CD14-positive monocyte (primary cell): ENCODE measurements at regions of chr6 and their contacts with region 1.

Region 1: GRCh38 chr6:116531675-116532570 is 13.6 kb downstream of the TRAPPC3L start:
- DNase-seq: peak; percentile 63 to 66 (median 65)
- H3K4me3 ChIP-seq: no peak overlapping the region
- H3K4me3 Mint-ChIP-seq: no peak overlapping the region
- H3K27ac ChIP-seq: no peak overlapping the region
- H3K27ac Mint-ChIP-seq: no peak overlapping the region
- H3K4me1 ChIP-seq: peaks cover 11 to 14% of the 10 kb centered on the region in 2 donors
- H3K4me1 Mint-ChIP-seq: peaks cover 19% of the 10 kb centered on the region
- H3K27me3 ChIP-seq: no peaks in the 10 kb centered on the region
- H3K27me3 Mint-ChIP-seq: peaks cover 0 to 4% (median 2%) of the 10 kb centered on the region in 3 donors
- CTCF ChIP-seq: peak; percentile 89

Region 2: GRCh38 chr6:116279260-116280063 is 252.5 kb before region 1 on chr6 and contains the start of gene TSPYL1:
- intact Hi-C with region 1: loop called in 1 of 2 experiments (anchors 5 kb)
- DNase-seq: peak; percentile 92 to 98 (median 95)
- H3K4me3 ChIP-seq: peak within 1 kb of the TSS; percentile 53 to 90 (median 85)
- H3K4me3 Mint-ChIP-seq: peak within 1 kb of the TSS; percentile 96 to 100
- H3K27ac ChIP-seq: peak within 1 kb of the TSS; percentile 96 to 97
- H3K27ac Mint-ChIP-seq: peak within 1 kb of the TSS; percentile 98 to 99 (median 99)
- H3K4me1 ChIP-seq: peaks cover 36 to 49% of the 10 kb centered on the region in 2 donors
- H3K4me1 Mint-ChIP-seq: peaks cover 43% of the 10 kb centered on the region
- H3K27me3 ChIP-seq: no peaks in the 10 kb centered on the region
- H3K27me3 Mint-ChIP-seq: peaks cover 0 to 2% (median 1%) of the 10 kb centered on the region in 3 donors
- CTCF ChIP-seq: no peak
- polyA plus RNA-seq, gene TSPYL1: 19.6 to 21.0 (median 20.0) TPM

Region 3: DNA sequence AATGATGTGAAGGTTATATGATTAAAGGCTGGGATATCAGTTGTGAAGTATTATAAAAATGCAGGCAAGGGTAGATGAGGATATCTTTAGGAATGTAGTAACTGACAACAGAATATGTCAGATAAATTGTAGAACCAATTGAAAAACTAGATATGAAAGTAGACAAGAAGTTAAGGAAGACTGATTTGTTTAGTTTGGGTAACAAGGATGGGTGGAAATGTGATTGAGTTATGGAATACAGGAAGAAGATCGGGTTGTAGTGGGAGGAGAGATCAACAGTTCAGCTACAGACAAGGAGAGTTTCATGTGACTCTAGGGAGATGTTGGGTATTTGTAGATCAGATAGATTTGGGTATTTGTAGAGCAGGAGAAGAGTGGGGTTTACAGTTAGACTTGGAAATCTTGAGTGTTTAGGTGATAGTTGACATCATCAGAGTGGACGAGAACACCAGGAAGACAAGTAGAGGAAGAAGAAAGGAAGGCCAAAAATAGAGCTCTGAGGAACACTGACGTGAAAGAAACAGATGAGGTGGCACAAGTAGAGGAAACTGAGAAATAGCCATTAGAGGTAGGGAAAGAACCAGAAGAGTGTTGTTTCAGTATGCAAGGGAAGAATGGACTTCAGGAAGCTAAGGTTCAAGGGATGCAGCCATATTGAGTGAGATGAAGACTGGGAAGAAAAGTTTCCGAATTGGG is 240.1 kb before region 1 on chr6:
- intact Hi-C with region 1: loop called in 1 of 2 experiments (anchors 5 kb)
- DNase-seq: no peak
- H3K4me3 ChIP-seq: no peak overlapping the region
- H3K4me3 Mint-ChIP-seq: no peak overlapping the region
- H3K27ac ChIP-seq: no peak overlapping the region
- H3K27ac Mint-ChIP-seq: no peak overlapping the region
- H3K4me1 ChIP-seq: peaks cover 4 to 6% of the 10 kb centered on the region in 2 donors
- H3K4me1 Mint-ChIP-seq: peaks cover 7% of the 10 kb centered on the region
- H3K27me3 ChIP-seq: no peaks in the 10 kb centered on the region
- H3K27me3 Mint-ChIP-seq: peaks cover 0 to 1% (median 0%) of the 10 kb centered on the region in 3 donors
- CTCF ChIP-seq: no peak

Region 4: DNA sequence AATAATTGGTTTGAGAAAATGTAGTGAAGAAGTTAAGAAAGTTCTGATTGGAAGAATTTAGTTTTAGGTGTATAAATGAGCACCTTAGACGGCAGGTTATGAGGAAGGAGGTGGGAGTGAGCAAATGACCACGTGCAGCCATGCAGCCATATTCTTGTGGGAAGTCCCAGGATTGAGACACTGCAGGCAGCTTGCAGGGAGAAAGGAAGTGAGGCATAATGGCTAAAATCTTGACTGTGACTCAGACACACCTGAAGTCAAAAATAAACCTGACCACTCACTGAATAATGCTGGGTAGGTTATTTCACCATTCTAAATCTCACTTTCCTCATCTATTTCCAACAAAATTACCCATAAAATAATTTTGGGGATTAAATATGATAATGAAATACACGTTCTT is 144.5 kb before region 1 on chr6:
- intact Hi-C with region 1: loop called in 1 of 2 experiments (anchors 10 kb)
- DNase-seq: peak; percentile 89 to 99 (median 94)
- H3K4me3 ChIP-seq: peak overlapping the region in 1 of 3 experiments; percentile 13
- H3K4me3 Mint-ChIP-seq: peak overlapping the region; percentile 21 to 85
- H3K27ac ChIP-seq: peak overlapping the region; percentile 36 to 91
- H3K27ac Mint-ChIP-seq: peak overlapping the region; percentile 93 to 99 (median 99)
- H3K4me1 ChIP-seq: peaks cover 62 to 74% of the 10 kb centered on the region in 2 donors
- H3K4me1 Mint-ChIP-seq: peaks cover 62% of the 10 kb centered on the region
- H3K27me3 ChIP-seq: no peaks in the 10 kb centered on the region
- H3K27me3 Mint-ChIP-seq: peaks cover 0 to 2% (median 0%) of the 10 kb centered on the region in 3 donors
- CTCF ChIP-seq: no peak